Heart left ventricle (tissue), 16 donors: ENCODE measurements at regions of chr1 and their contacts with region 1.

Region 1: DNA sequence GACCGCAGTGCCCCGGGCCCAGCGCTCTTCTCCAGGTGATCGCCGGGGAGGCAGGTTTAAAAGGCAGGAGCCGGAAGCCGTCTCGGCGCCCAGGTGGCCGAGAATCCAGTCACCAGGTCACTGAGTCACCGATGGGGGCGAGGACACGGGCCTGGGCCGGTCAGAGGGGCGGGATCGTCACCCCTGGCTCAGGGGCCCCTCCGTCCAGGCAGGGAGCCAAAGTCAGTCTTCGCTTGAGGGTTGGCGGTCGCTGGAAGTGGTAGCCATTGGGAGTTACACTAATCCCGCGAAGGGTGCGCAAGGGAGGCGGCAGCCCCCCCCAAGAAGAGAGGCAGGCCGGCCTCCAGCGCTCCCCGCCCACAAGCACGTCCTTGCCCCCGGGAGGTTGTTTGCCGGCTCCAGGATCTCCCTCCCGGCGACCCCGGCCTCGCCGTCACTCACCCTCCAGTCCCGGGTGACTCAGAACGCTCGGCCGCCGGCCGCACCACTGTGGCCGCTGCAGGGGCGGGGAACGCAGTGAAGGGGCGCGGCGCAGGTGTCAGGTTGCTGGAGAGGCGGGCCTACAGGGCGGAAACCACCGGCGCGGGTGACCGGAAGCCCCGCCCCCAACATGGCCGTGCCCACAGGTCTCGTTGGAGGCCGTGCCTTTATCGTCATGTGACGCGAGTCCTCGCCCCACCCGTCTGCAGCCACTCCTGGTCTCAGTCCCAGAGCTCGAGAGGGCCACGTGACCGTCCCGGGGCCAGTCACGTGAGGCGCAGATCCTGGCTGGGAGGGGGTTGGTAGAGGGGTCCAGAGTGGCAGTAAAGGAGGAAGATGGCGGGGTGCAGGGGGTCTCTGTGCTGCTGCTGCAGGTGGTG is at the starts of genes CLCN6 and MTHFR:
- DNase-seq: peak; percentile 100
- ATAC-seq: peak; percentile 85 to 90 (median 88)
- H3K4me3 ChIP-seq: peak within 1 kb of the TSS; percentile 63 to 98 (median 82)
- H3K27ac ChIP-seq: peak within 1 kb of the TSS; percentile 97 to 100 (median 99)
- H3K4me1 ChIP-seq: peaks cover 14 to 82% (median 55%) of the 10 kb centered on the region in 12 donors
- H3K27me3 ChIP-seq: no peaks in the 10 kb centered on the region
- CTCF ChIP-seq: no peak
- POLR2A ChIP-seq: peak; percentile 95 to 99
- total RNA-seq, gene CLCN6: 11.6 to 21.5 (median 17.2) TPM
- total RNA-seq, gene MTHFR: 26.9 to 61.2 (median 38.1) TPM

Region 2: GRCh38 chr1:11272832-11273594 is 532.7 kb before region 1 on chr1 and contains the start of gene UBIAD1:
- intact Hi-C with region 1: loop called in 1 of 10 experiments (anchors 10 kb)
- DNase-seq: peak; percentile 84 to 93 (median 91)
- ATAC-seq: peak; percentile 83 to 96 (median 96)
- H3K4me3 ChIP-seq: peak within 1 kb of the TSS; percentile 65 to 97 (median 86)
- H3K27ac ChIP-seq: peak within 1 kb of the TSS; percentile 91 to 99 (median 96)
- H3K4me1 ChIP-seq: peaks cover 8 to 35% (median 23%) of the 10 kb centered on the region in 12 donors
- H3K27me3 ChIP-seq: no peaks in the 10 kb centered on the region
- CTCF ChIP-seq: peak in 6 of 12 donors; percentile 11 to 50 (median 34)
- POLR2A ChIP-seq: peak in 1 of 2 donors; percentile 54
- total RNA-seq, gene UBIAD1: 10.2 to 17.3 (median 11.6) TPM

Region 3: DNA sequence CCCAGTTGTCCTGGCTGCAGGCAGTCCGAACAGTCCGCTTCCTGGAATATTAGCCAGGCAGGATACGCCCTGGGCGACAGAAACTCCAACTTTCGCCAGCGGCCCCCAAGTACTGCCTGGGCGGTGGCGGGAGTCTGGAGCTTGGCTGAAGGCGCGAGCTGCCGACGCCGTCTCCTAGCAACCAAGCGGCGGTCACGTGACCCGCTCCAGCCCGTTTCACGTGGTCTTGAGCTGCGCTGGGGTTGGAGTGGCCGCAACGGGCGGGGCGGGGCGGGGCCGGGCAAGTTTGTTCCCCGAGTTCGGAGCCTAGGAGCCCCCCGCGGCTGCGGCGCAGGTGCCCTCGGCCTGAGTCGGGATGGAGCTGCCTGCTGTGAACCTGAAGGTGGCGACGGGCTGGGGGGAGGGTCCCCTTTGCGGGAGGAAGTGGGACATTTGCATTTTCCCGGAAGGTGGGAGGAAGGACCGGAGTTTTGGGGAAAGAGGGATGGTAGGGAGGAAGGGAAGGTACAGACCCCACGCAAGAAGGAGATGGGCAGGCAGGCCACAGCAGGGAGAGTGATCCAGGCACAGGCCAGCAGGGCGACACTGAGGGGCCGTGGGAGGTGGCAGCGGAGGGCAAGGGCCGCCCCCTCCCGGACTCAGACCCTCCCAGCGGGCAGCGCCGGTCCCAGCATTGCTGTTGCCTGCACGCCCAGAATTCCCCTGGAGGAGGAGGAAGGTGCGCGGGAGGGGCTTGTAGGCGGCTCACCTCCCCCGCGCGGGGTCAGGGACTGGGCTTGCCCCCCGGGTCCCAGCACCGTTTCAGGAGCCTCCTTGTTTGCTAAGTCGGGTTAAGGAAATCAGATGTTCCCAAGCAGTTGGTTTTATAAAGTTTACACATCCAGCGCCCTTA is 69.6 kb before region 1 on chr1 and contains the start of gene AGTRAP:
- intact Hi-C with region 1: loop called in 8 of 10 experiments (anchors 5 to 10 kb)
- DNase-seq: peak; percentile 97 to 98 (median 98)
- ATAC-seq: peak; percentile 85 to 94 (median 87)
- H3K4me3 ChIP-seq: peak within 1 kb of the TSS; percentile 67 to 98 (median 84)
- H3K27ac ChIP-seq: peak within 1 kb of the TSS; percentile 39 to 96 (median 84)
- H3K4me1 ChIP-seq: peaks cover 5 to 76% (median 28%) of the 10 kb centered on the region in 12 donors
- H3K27me3 ChIP-seq: no peaks in the 10 kb centered on the region
- CTCF ChIP-seq: no peak
- POLR2A ChIP-seq: peak in 1 of 2 donors; percentile 65
- total RNA-seq, gene AGTRAP: 11.8 to 36.7 (median 24.5) TPM

Region 4: DNA sequence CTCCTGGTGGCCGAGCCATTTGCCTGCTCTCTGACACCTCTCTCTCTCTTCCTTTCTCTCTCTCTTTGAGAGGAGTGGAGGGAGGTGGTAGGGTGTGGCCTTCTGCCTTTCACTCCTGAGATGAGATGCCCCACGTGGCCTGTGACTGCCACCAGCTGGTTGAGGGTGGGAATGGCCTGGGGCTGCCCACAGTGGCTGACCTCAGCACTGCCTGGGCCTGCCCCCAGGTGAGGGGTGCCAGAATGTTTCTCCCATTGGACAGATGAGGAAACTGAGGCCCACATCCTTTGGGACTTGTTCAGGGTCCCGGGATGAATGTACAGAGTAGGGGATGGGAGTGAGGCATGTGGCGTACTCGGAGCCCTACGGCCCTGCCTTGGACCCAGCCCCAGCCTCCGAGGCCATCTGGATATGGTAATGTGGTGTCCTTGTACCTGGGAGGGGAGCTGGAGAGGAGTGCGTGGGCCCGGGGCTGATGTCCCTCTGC is 56.4 kb before region 1 on chr1:
- intact Hi-C with region 1: no loop called
- DNase-seq: peak in 3 of 5 donors; percentile 61 to 77 (median 61)
- ATAC-seq: peak; percentile 14 to 66 (median 57)
- H3K4me3 ChIP-seq: no peak overlapping the region
- H3K27ac ChIP-seq: no peak overlapping the region
- H3K4me1 ChIP-seq: peaks cover 0 to 15% (median 5%) of the 10 kb centered on the region in 12 donors
- H3K27me3 ChIP-seq: no peaks in the 10 kb centered on the region
- CTCF ChIP-seq: peak; percentile 23 to 68 (median 40)
- POLR2A ChIP-seq: no peak

Region 5: DNA sequence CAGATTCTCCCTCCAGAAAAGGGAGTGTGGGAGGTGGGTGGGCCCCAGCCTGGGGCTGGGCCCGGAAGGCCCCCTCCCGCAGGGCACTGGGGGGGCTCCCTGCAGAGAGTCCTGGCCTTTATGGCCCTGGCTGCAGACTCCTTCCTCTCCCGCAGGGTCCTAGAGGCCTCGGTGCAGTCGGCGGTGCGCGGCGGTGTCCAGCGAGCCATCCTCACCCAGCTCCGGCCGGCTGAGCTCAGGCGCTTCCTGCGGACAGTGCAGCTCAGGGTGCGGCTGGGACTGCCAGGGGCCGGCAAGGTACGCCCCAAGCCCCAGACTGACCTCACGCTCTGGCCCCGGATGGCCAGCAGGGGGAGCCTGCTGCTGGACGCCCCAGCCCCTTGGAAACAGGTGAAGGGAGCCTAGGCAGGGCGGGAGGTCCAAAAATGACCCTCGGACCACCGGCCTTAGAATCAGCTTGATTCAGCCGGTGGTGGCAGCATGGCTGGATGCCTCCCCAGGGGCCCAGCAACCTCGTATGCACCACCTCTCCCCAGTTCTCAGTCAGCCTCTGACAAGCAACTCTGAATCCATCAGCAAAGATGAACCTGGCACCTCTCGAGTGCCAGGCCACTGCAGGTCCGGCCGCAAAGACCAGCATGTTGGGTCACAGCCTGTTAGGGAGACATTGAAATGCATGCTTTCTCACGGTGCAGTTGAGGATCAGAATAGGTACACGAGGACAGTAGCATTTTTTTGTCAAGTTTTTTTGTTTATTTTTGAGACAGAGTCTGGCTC is 20.5 kb before region 1 on chr1:
- intact Hi-C with region 1: loop called in 6 of 10 experiments (anchors 1 to 2 kb)
- DNase-seq: peak; percentile 81 to 90 (median 83)
- ATAC-seq: peak; percentile 26 to 60 (median 57)
- H3K4me3 ChIP-seq: peak overlapping the region in 10 of 12 donors; percentile 13 to 53 (median 42)
- H3K27ac ChIP-seq: peak overlapping the region in 11 of 12 donors; percentile 46 to 99 (median 71)
- H3K4me1 ChIP-seq: peaks cover 26 to 59% (median 57%) of the 10 kb centered on the region in 12 donors
- H3K27me3 ChIP-seq: no peaks in the 10 kb centered on the region
- CTCF ChIP-seq: peak; percentile 83 to 98 (median 89)
- POLR2A ChIP-seq: peak in 1 of 2 donors; percentile 37

Region 6: DNA sequence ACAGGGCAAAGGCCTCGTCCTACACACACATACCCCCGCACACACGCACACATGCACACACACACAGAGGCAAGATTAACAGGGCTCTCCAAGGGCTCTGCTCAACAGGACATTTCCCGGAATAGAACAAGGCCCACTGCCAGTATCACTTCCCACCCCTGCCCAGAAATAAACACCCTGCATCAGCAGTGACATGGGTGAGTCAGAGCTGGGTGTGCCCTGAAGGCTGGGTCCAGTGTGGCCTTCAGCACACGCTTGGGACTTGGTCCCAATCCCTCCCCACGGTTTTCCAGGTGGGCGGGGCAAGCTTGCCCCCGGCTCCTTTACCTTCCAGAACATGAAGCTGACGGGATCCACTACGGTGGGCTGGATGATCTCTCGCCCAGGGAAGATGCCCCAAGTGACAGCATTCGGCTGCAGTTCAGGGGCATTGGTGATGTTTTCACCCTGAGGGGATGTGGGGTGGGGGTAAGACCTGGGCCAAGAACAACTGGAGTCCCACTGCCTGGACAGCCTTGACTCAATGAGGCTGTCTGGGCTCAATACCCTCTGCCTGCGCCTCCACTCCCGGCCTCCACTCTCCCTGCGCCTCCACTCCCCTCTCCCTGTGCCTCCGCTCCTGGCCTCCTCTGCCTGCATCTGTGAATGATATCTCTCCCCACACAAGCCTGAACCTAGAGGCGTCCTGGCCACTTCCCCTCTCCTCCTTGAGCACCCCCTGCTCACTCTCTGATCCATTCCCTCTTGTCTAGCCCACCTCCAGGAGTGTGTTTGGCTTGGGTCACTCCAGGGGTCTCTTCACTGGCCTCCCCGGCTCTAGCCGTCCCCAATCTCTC is 14.6 kb before region 1 on chr1:
- intact Hi-C with region 1: loop called in 7 of 10 experiments (anchors 1 to 2 kb)
- DNase-seq: peak; percentile 89 to 97 (median 95)
- ATAC-seq: peak; percentile 81 to 90 (median 84)
- H3K4me3 ChIP-seq: peak overlapping the region in 5 of 12 donors; percentile 5 to 28 (median 21)
- H3K27ac ChIP-seq: peak overlapping the region; percentile 85 to 99 (median 98)
- H3K4me1 ChIP-seq: peaks cover 37 to 91% (median 80%) of the 10 kb centered on the region in 12 donors
- H3K27me3 ChIP-seq: no peaks in the 10 kb centered on the region
- CTCF ChIP-seq: no peak
- POLR2A ChIP-seq: peak in 1 of 2 donors; percentile 64